G401 (cell line): ENCODE measurements at regions of chr12 and their contacts with region 1.

Region 1: DNA sequence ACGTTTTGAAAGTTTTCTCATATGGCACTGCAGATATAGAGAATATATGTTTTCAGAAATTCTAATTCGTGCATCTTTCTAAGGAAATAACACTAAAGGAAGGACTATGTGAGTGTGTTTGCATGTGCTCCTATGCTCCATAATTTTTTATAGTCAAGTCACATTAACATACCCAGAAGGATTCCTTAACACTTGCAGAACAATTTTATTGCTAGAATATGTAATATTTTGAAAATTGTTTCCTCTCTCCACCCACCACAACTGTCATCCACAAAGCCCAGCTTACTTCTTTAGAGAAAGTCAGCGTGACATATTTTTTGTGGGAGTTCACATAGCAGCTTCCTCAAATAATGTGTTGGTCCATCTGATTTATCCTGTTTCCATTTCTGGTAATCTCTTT is 604.6 kb upstream of the MGAT4C start:
- DNase-seq: no peak

Region 2: DNA sequence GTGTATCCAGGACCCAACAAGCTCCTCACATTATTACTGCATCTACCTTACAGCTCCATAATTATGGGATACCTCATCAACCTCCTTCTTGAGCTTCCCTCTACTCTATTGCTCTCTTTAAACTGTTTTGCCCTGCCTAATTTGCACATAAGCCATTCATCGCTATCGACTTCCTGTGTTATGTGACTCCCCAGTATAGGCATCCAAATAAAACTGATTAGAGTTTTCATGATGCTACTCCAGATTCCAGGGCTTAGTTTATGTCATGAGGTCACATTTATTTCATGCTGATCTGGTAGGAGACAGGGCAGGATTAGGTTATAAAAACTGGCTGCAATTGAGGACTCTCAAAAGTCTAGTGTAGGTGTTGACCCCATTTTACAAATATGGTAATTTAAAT is 34.7 kb before region 1 on chr12:
- in situ Hi-C with region 1: loop called (anchors 5 kb)
- DNase-seq: no peak